ENCODE measurements at regions of chr4 and their contacts with region 1.

Region 1: GRCh38 chr4:22500831-22501719 is 14.8 kb downstream of the ADGRA3 start:
- DNase-seq: peak; percentile 31 to 32
- ATAC-seq: peak; percentile 75 to 84
- H3K4me3 ChIP-seq: no peak overlapping the region
- H3K27ac ChIP-seq: peak overlapping the region; percentile 13 to 69; a peak in 3 of 6 replicates
- H3K4me1 ChIP-seq: peaks cover 20% of the 10 kb centered on the region; the same call in 2 of the 3 replicates
- CTCF ChIP-seq: no peak
- EP300 ChIP-seq: no peak
- POLR2A ChIP-seq: no peak
- RAD21 ChIP-seq: no peak

Region 2: DNA sequence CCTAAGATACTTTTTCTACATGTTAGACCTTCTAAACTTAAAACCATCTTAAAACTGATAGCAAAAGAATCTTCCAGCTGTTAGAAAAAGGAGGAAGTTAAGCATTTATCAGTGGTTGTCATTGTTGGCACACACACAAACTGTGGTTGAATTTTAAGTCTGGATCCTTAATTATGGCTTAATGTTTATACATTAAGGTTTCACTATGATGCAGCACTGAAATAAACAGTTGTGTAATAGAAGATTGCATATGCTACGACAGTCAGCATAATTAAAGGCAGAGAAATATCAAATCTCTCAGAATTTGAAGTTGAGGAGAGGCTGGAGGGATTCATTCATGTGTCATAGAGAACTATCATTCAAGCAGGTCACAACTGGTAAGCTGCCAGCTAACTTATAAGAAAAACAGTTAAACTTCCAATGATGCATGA is 17.5 kb before region 1 on chr4:
- CTCF ChIA-PET with region 1: no interaction called
- POLR2A ChIA-PET with region 1: no interaction called
- DNase-seq: no peak
- ATAC-seq: no peak
- H3K4me3 ChIP-seq: no peak overlapping the region
- H3K27ac ChIP-seq: no peak overlapping the region
- H3K4me1 ChIP-seq: peaks cover 17% of the 10 kb centered on the region
- CTCF ChIP-seq: no peak
- EP300 ChIP-seq: no peak
- POLR2A ChIP-seq: no peak
- RAD21 ChIP-seq: no peak

Region 3: DNA sequence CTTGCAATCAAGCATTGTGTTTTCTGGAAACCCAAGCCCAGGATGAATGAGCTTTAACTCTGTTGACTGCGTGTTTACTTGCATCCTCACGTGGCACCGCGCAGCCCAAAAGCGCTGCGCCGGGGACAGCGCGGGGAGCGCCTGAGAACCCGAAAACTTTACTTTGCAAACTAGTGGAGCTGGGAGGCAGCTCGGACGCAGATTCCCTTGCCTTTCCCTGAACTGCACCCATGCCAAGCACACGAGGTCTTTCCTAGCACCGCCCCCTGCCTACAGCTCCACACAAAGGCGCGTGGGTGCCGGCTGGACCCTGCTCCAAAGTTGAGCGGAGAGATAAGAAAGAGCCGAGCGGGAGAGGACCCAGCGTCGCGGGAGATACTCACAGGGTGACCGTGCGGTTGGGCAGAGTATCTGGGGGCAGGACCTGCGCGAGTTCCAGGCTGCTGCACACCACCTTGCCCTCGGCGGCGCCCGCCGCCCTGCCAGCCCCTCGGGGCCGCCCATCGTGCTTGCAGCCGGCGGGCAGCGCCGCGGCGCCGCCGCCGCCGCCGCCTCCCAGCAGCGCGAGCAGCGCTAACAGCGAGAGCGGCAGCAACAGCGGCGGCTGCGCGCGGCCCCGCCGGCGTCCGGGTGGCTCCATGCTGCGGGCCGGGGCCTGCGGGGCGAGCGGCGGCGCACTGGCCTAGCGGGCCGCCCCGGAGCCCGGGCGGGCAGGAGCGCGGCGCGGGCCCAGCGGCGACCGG is 14.2 kb after region 1 on chr4:
- CTCF ChIA-PET with region 1: no interaction called
- POLR2A ChIA-PET with region 1: interaction called, 14 read pairs
- DNase-seq: peak; percentile 74
- ATAC-seq: peak; percentile 78 to 84
- H3K4me3 ChIP-seq: peak overlapping the region; percentile 71
- H3K27ac ChIP-seq: peak overlapping the region; percentile 92 to 99
- H3K4me1 ChIP-seq: peaks cover 15% of the 10 kb centered on the region; the same call in 2 of the 3 replicates
- CTCF ChIP-seq: no peak
- EP300 ChIP-seq: no peak
- POLR2A ChIP-seq: peak; percentile 25; the same call in 1 of the 2 replicates
- RAD21 ChIP-seq: no peak

Measured in A549 (cell line).